ENCODE measurements at regions of chr4 and their contacts with region 1.

Region 1: DNA sequence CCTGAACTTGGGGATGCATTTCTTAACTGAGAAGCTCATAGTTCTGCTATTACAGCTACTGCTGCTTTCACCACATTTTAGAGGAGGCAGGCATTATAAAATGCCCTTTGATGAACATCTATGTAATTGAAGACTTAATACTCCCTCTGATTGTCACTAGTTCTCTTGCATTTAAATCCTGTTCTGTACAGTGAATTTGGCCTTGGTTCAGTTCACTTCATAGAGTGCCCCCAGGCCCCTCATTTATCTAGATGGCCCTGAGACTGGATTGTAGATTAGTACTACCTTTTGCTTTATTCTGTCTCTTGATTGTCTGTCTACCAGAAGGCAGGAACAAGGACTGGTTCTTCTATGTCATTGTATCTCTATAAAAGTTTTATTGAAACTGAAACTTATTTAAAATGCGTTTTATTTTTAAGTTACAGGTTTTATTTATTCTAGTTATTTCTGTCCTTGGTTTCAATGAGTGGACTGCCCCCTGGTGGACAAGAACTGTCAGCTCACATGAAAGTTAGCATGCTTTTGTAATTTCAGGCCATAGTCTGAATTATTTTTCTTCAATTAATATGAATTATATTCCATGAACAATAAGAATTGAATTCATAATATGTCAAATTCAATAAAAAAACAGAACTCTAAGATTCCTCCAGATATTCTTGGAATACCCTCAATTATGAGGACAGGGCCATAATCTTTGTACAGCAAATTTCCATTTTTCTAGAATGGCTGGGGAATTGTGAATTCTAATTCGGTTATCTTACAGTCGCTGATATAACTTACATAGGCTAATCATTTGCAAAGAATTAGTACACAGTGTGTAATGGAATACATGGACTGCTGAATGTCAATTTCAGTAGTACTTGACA is 47.2 kb upstream of the TMEM33 start:
- DNase-seq: no peak
- H3K4me3 ChIP-seq: no peak overlapping the region
- H3K27ac ChIP-seq: no peak overlapping the region
- H3K4me1 ChIP-seq: no peaks in the 10 kb centered on the region
- H3K27me3 ChIP-seq: peaks cover 0 to 24% (median 0%) of the 10 kb centered on the region in 4 donors
- CTCF ChIP-seq: peak; percentile 60 to 91 (median 83)
- EP300 ChIP-seq: no peak
- POLR2A ChIP-seq: no peak

Region 2: DNA sequence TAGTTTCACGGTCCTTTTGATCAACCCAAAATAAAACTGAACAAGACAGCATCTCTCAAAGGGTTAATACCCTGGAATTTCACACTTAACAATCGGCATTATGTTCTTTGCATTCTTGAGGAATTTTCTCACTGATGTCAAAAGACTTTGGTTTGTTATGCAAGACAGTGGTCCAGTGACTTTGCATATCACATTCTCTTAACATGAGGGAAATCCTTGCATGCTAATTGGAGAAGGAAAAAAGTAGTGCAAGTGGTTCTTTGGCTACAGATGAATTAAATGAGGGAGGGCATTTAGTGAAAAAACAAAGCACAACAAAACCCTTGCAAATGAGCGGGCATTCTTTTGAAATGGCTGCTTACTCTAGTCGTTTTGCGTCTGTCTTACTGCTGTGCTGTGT is 455.2 kb before region 1 on chr4:
- intact Hi-C with region 1: no loop called
- DNase-seq: no peak
- H3K4me3 ChIP-seq: no peak overlapping the region
- H3K27ac ChIP-seq: peak overlapping the region in 2 of 4 donors; percentile 80
- H3K4me1 ChIP-seq: peaks cover 62 to 88% (median 81%) of the 10 kb centered on the region in 4 donors
- H3K27me3 ChIP-seq: no peaks in the 10 kb centered on the region
- CTCF ChIP-seq: no peak
- EP300 ChIP-seq: no peak
- POLR2A ChIP-seq: no peak

Region 3: GRCh38 chr4:41525129-41525528 is 362.9 kb before region 1 on chr4:
- intact Hi-C with region 1: no loop called
- DNase-seq: peak; percentile 74
- H3K4me3 ChIP-seq: no peak overlapping the region
- H3K27ac ChIP-seq: no peak overlapping the region
- H3K4me1 ChIP-seq: peaks cover 4 to 21% (median 9%) of the 10 kb centered on the region in 4 donors
- H3K27me3 ChIP-seq: no peaks in the 10 kb centered on the region
- CTCF ChIP-seq: no peak
- EP300 ChIP-seq: no peak
- POLR2A ChIP-seq: no peak

Region 4: GRCh38 chr4:41600243-41600912 is 287.7 kb before region 1 on chr4:
- intact Hi-C with region 1: no loop called
- DNase-seq: no peak
- H3K4me3 ChIP-seq: no peak overlapping the region
- H3K27ac ChIP-seq: no peak overlapping the region
- H3K4me1 ChIP-seq: peaks cover 5 to 36% (median 12%) of the 10 kb centered on the region in 4 donors
- H3K27me3 ChIP-seq: no peaks in the 10 kb centered on the region
- CTCF ChIP-seq: no peak
- EP300 ChIP-seq: no peak
- POLR2A ChIP-seq: no peak

Region 5: GRCh38 chr4:41692717-41693345 is 195.2 kb before region 1 on chr4:
- intact Hi-C with region 1: loop called (anchors 2 kb)
- DNase-seq: no peak
- H3K4me3 ChIP-seq: no peak overlapping the region
- H3K27ac ChIP-seq: no peak overlapping the region
- H3K4me1 ChIP-seq: no peaks in the 10 kb centered on the region
- H3K27me3 ChIP-seq: no peaks in the 10 kb centered on the region
- CTCF ChIP-seq: peak; percentile 60 to 82 (median 73)
- EP300 ChIP-seq: no peak
- POLR2A ChIP-seq: no peak